CD8-positive, alpha-beta T cell (primary cell): ENCODE measurements at regions of chr19 and their contacts with region 1.

Region 1: DNA sequence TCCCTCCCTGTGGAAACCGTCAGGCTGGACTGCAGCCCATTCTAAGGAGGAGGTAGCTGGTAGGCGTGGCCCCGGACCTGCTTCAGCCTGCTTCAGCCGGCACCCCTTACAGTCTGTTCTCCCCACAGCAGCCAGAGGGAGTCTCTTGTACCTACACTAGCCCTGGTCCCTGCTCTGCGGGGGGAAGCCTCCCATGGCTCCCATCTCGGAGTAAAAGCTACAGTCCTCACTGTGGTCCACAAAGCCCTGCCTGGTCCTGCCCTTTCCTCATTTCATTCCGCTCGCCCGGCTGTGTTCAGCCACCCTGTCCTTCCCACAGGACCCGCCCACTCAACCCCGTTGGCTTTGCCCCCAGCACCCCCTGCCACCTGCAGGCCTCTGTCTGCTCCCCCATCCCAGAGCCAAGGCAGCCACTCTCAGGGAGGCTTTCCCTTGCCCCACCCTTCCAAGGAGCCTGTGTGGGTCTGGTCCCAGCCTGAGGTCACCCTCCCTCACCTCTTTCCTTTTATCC is 1.3 kb downstream of the PGLYRP1 start:
- DNase-seq: no peak
- ATAC-seq: no peak
- H3K4me3 ChIP-seq: no peak overlapping the region
- H3K4me3 Mint-ChIP-seq: no peak overlapping the region
- H3K27ac ChIP-seq: no peak overlapping the region
- H3K27ac Mint-ChIP-seq: no peak overlapping the region
- H3K4me1 ChIP-seq: peaks cover 11% of the 10 kb centered on the region
- H3K4me1 Mint-ChIP-seq: peaks cover 16% of the 10 kb centered on the region
- H3K27me3 ChIP-seq: peaks cover 0 to 4% of the 10 kb centered on the region in 2 experiments
- H3K27me3 Mint-ChIP-seq: peaks cover 20% of the 10 kb centered on the region
- CTCF ChIP-seq: no peak

Region 2: DNA sequence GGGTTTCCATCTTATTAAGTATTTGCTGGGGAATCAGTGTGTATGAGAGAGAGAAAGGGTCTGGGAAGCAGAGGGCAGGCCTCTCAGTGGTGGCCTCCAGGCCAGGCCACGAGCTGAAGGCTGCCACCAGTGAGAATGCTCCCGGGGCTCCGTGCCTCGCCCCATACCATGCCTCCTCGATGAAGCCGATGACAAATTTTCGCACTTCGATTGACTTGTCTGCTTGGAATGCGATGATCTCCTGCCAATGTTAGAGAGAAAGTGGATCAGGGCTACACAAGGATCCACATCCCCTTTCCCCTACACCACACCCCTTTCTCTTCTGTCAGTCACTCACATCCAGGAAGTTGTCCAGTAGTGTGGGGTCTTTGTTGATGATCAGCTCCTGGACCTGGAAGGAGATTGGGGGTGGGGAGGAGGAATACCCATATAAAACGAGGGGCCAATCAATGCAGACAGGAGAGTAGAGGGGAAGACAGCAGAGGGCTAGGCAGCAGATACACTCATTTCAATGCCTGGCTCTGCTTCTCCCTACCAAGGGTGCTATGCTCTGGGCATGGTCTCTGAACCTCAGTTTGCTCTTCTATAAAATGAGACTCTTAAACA is 169.3 kb before region 1 on chr19:
- CTCF ChIA-PET with region 1: no interaction called
- POLR2A ChIA-PET with region 1: no interaction called
- intact Hi-C with region 1: no loop called
- DNase-seq: no peak
- ATAC-seq: no peak
- H3K4me3 ChIP-seq: no peak overlapping the region
- H3K4me3 Mint-ChIP-seq: no peak overlapping the region
- H3K27ac ChIP-seq: no peak overlapping the region
- H3K27ac Mint-ChIP-seq: no peak overlapping the region
- H3K4me1 ChIP-seq: no peaks in the 10 kb centered on the region
- H3K4me1 Mint-ChIP-seq: peaks cover 6% of the 10 kb centered on the region
- H3K27me3 ChIP-seq: no peaks in the 10 kb centered on the region
- H3K27me3 Mint-ChIP-seq: no peaks in the 10 kb centered on the region
- CTCF ChIP-seq: no peak

Region 3: GRCh38 chr19:46192992-46193650 is 171.5 kb after region 1 on chr19:
- CTCF ChIA-PET with region 1: no interaction called
- POLR2A ChIA-PET with region 1: no interaction called
- intact Hi-C with region 1: loop called in 1 of 2 experiments (anchors 5 kb)
- DNase-seq: peak in 2 of 9 experiments; percentile 13 to 38
- ATAC-seq: no peak
- H3K4me3 ChIP-seq: no peak overlapping the region
- H3K4me3 Mint-ChIP-seq: no peak overlapping the region
- H3K27ac ChIP-seq: no peak overlapping the region
- H3K27ac Mint-ChIP-seq: no peak overlapping the region
- H3K4me1 ChIP-seq: no peaks in the 10 kb centered on the region
- H3K4me1 Mint-ChIP-seq: no peaks in the 10 kb centered on the region
- H3K27me3 ChIP-seq: peaks cover 0 to 11% of the 10 kb centered on the region in 2 experiments
- H3K27me3 Mint-ChIP-seq: peaks cover 55% of the 10 kb centered on the region
- CTCF ChIP-seq: no peak